Activated CD4-positive, alpha-beta T cell treated with anti-CD3 and anti-CD28 coated beads for 36 hours (primary cell): ENCODE measurements at regions of chr6 and their contacts with region 1.

Region 1: DNA sequence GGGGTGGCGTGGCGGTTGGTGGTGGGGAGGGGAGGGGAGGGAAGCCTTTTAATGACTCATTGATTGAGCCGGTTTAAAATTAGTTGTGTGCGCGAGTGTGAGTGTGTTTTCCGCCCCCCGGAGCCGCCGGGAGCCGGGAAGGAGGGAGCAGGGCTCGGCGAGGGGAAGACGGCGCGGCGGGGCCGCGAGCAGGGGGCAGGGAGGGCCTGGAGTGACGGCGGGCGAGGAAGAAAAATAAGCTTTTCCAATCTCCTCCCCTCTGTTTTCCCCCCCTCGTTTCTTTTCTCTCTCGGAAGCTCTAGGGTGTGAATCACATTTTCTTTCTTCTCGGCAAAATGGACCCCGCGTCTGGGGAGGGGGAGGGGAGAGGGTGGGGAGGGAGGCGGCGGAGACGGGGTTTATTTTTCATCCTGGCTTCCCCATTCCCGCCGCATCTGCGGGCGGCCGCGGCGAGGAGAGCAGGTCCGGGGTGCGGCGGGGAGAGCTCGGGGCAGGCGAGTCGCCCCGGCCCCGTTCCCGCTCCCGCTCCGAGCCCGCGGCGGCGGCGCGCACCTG is 847 bp downstream of the BICRAL start:
- DNase-seq: peak; percentile 83
- ATAC-seq: peak; percentile 64
- H3K4me3 Mint-ChIP-seq: peak overlapping the region; percentile 81
- H3K27ac Mint-ChIP-seq: peak overlapping the region; percentile 96
- H3K4me1 Mint-ChIP-seq: peaks cover 25% of the 10 kb centered on the region
- H3K27me3 Mint-ChIP-seq: no peaks in the 10 kb centered on the region

Region 2: DNA sequence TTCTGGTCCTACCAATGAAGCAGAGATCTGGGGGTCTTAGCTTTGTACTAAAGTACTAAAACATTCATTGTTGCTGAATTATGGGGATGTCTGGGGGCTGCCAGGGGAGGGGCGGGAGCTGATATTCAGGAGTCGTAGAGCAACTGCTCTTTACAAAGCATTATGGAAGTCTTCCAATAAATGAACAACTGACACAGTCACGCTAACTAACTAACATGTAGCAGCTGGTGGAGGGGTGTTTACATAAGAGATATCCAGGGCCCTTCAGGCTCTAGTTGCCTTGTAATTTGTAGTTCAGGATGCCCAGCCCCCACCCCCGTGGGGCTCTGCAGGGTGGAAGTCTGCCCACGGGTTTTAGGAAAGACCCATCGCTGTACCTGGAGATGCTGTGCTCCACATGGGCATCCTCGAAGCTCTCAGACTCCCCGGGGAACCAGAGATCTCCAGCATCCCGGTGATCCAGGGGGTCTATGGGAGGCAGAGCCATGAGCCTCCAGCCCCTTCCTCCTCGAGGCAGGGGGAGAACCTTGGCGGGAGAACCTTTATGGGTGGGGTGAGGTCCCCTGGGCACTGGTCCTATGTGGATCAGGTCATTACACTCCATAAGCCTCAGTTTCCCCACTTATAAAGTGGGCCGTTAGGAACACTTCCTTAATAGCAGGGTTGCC is 1623.2 kb before region 1 on chr6:
- CTCF ChIA-PET with region 1: no interaction called
- POLR2A ChIA-PET with region 1: no interaction called
- intact Hi-C with region 1: no loop called
- DNase-seq: no peak
- ATAC-seq: no peak
- H3K4me3 Mint-ChIP-seq: no peak overlapping the region
- H3K27ac Mint-ChIP-seq: no peak overlapping the region
- H3K4me1 Mint-ChIP-seq: no peaks in the 10 kb centered on the region
- H3K27me3 Mint-ChIP-seq: no peaks in the 10 kb centered on the region

Region 3: DNA sequence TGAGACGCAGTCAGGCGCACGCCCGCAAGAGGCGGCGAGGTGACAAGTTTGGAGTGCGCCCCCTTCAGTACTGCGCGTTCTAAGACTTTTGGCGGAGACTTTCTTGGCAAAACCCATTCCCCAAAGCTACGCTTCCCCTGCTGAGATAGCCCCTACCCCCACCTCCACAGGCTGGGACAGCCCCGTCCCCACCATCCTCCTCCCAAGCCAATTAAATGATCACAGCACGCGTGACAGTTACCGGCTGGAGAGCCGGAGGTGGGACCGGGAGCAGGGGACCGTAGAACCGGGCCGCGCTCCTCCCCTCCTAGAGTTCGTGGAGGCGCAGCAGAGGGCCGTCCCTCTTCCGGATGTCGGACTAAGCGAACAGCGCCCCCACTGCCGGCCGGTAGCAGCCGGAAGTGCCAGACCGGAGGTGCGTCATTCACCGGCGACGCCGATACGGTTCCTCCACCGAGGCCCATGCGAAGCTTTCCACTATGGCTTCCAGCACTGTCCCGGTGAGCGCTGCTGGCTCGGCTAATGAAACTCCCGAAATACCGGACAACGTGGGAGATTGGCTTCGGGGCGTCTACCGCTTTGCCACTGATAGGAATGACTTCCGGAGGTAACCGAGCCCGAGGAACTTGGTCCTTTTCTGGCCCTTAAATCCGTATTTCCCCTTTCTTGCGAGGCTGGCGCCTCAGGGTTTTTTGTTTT is 995.3 kb before region 1 on chr6 and contains the start of gene TOMM6:
- CTCF ChIA-PET with region 1: no interaction called
- POLR2A ChIA-PET with region 1: no interaction called
- intact Hi-C with region 1: loop called in 1 of 2 experiments (anchors 10 kb)
- DNase-seq: peak; percentile 98
- ATAC-seq: peak; percentile 86
- H3K4me3 Mint-ChIP-seq: peak within 1 kb of the TSS; percentile 96
- H3K27ac Mint-ChIP-seq: peak within 1 kb of the TSS; percentile 98
- H3K4me1 Mint-ChIP-seq: peaks cover 19% of the 10 kb centered on the region
- H3K27me3 Mint-ChIP-seq: peaks cover 2% of the 10 kb centered on the region
- total RNA-seq, gene TOMM6: 282 to 345 TPM

Region 4: GRCh38 chr6:42563697-42564505 is 218.8 kb before region 1 on chr6 and contains the start of gene UBR2:
- CTCF ChIA-PET with region 1: no interaction called
- POLR2A ChIA-PET with region 1: no interaction called
- intact Hi-C with region 1: loop called (anchors 2 to 10 kb)
- DNase-seq: peak; percentile 97
- ATAC-seq: peak; percentile 97
- H3K4me3 Mint-ChIP-seq: peak within 1 kb of the TSS; percentile 97
- H3K27ac Mint-ChIP-seq: peak within 1 kb of the TSS; percentile 95
- H3K4me1 Mint-ChIP-seq: peaks cover 31% of the 10 kb centered on the region
- H3K27me3 Mint-ChIP-seq: no peaks in the 10 kb centered on the region
- total RNA-seq, gene UBR2: 23.9 to 28.1 TPM

Region 5: DNA sequence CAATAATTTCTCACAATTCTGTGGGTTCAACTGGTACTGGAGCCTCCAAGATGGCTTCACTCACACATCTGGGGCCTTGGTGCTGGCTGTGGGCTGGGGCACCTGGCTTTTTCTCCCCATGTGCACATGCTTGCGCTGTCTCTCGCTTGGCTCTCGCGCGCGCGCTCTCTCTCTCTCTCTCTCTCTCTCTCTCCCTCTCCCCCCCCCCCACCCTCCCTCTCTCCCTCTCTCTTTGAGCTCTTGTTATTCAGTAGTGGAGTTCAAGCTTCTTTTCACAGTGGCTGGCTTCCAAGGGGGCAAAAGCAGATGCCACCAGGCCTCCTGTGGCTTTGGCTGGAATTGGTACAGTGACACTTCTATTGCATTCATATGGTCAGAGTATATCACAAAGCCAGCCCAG is 26.0 kb before region 1 on chr6:
- CTCF ChIA-PET with region 1: interaction called, 7 read pairs
- POLR2A ChIA-PET with region 1: interaction called, 12 read pairs
- intact Hi-C with region 1: no loop called
- DNase-seq: no peak
- ATAC-seq: no peak
- H3K4me3 Mint-ChIP-seq: no peak overlapping the region
- H3K27ac Mint-ChIP-seq: no peak overlapping the region
- H3K4me1 Mint-ChIP-seq: peaks cover 10% of the 10 kb centered on the region
- H3K27me3 Mint-ChIP-seq: no peaks in the 10 kb centered on the region

Region 6: DNA sequence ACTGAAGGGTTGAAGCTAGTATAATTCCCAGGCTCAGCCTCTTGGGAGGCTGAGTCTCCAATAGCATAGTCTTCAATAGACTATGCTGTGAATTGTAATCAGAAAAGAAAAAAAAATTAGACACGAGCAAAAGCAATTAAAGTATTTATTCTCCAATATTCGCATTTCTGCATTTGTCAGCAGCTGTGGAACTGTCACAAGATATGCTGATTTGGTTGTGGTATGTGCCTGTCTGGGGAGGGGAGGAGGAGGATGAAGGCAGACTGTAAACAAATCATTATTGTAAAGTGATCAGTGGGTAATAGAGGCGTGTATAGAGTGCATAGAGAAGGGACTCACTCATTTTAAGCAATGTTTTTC is 11.0 kb before region 1 on chr6:
- CTCF ChIA-PET with region 1: interaction called, 6 read pairs
- POLR2A ChIA-PET with region 1: interaction called, 28 read pairs
- intact Hi-C with region 1: loop called (anchors 1 kb)
- DNase-seq: no peak
- ATAC-seq: no peak
- H3K4me3 Mint-ChIP-seq: peak overlapping the region; percentile 70
- H3K27ac Mint-ChIP-seq: peak overlapping the region; percentile 99
- H3K4me1 Mint-ChIP-seq: peaks cover 58% of the 10 kb centered on the region
- H3K27me3 Mint-ChIP-seq: no peaks in the 10 kb centered on the region

Region 7: DNA sequence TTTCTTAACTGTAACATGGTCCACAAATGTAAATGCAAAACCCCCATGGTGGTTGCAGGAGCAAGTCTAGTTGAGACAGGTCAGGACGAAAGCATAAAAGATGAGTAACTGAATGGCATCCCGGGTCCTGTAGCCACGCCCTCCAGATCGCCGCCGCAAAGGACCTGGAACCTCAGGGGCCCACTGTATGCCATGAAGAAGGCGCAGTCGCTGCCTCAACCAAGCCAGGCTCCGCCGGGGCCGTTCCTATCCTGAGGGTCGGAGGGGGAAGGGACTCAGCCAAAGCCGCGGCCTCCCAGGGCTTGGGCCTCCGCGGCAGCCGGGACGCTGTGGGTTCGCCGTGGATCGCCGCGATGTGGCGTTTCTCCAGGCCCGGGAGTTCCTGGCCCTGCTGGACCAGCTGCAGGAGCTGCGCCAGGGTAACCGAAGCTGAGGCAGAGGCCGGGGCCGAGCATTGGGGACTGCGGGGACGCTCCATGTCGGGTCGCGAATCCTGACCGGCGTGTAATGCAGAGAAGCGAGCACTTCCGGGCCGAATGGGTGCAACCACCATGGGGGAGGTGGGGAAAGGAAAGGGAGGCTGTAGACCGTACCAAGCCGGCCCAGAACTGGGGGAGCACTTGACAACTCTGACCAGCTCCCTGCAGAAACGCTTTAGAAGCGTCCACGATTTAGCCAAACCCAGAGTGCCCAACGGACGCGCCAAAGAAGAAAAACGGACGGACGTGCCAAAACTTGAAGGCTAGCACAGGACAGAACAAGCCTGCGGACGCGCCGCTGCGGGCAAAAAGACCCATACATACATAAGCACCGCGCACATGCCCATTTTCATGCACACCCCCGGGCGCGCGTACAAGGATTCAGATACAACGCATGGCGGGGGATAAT is 107.9 kb after region 1 on chr6:
- CTCF ChIA-PET with region 1: no interaction called
- POLR2A ChIA-PET with region 1: no interaction called
- intact Hi-C with region 1: loop called in 1 of 2 experiments (anchors 1 kb)
- DNase-seq: peak; percentile 95
- ATAC-seq: peak; percentile 89
- H3K4me3 Mint-ChIP-seq: peak overlapping the region; percentile 90
- H3K27ac Mint-ChIP-seq: peak overlapping the region; percentile 98
- H3K4me1 Mint-ChIP-seq: peaks cover 31% of the 10 kb centered on the region
- H3K27me3 Mint-ChIP-seq: no peaks in the 10 kb centered on the region

Region 8: DNA sequence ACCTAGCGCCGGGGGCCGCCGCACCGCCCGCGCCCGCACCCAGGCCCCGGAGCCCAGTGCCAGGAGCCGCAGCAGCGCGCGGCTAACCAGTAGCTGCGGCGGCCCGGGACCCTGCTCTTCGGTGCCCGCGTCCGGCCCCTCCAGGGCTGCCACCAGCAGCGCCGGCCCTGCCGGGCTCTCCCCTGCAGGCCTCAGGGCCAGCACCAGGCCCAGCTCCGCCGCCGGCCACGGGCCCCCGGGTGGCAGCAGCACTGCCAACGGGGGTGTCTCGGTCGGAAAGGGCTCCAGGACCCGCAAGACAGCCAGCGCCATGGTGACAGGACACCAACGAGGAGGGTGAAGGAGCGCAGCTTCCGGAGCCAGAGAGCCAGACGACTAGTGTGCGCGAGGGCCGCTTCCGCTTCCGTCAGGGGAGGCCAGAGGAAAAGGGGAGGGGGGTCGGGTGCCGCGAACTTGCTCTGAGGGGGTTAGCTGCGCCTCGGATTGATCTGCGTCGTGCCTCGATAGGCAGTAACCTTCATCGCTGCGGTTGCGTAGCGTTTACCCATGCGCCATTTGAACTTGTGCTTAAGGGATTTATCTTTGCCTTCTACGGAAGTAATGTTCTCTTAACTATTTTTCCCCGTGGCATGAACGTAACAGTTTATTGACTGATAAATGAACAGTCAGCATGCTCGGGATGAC is 196.3 kb after region 1 on chr6 and contains the start of gene PEX6:
- CTCF ChIA-PET with region 1: no interaction called
- POLR2A ChIA-PET with region 1: interaction called, 4 read pairs
- intact Hi-C with region 1: loop called (anchors 1 to 10 kb)
- DNase-seq: peak; percentile 98
- ATAC-seq: peak; percentile 95
- H3K4me3 Mint-ChIP-seq: peak within 1 kb of the TSS; percentile 89
- H3K27ac Mint-ChIP-seq: peak within 1 kb of the TSS; percentile 95
- H3K4me1 Mint-ChIP-seq: peaks cover 45% of the 10 kb centered on the region
- H3K27me3 Mint-ChIP-seq: no peaks in the 10 kb centered on the region
- total RNA-seq, gene PEX6: 10.7 to 14.6 TPM